Calu3 (cell line): ENCODE measurements at regions of chr10 and their contacts with region 1.

Region 1: DNA sequence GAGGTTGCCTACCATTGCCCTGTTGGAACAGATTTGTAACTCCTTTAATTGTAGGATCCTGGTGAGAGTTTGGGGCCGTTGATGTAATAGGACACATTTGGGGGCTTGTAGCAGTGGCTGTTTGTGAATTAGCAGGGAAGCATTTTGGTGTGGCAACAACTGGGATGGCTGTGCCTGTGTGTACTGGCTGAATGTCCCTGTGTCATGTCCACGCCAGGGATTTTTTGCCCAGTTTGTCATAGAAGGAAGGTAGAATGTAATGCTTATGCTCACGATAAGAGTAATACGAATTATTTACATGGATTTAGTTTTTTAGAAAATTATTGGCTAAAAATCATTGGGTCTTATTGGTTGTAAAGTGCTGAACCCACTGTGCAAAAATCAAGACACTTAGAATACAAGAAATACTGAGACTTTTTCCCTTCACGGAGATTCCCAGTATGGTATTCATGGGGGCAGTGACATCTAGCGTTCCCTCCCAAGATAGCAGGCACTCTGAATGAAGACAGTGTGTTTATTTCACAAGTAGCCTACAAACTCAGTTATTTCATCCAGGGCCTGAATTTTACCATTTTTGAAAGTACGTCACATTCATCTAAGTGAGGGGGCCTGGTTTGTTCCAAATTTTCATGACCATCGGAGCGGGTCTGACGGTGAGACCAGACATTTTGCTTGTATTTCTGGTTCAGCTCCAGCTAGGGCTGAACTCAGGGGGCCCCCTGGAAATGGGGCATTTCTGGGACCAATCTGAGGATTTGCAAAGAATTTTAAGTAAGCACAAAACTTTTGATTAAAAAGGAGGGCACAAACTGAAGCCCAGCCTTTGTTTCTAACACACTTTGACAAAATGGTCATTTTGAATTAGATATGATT is 74.7 kb downstream of the CACNB2 start:
- DNase-seq: peak; percentile 44
- H3K4me3 Mint-ChIP-seq: no peak overlapping the region
- H3K27ac Mint-ChIP-seq: no peak overlapping the region
- H3K4me1 Mint-ChIP-seq: no peaks in the 10 kb centered on the region
- H3K27me3 Mint-ChIP-seq: no peaks in the 10 kb centered on the region
- CTCF ChIP-seq: peak; percentile 57

Region 2: GRCh38 chr10:17847585-17848296 is 367.2 kb before region 1 on chr10:
- CTCF ChIA-PET with region 1: interaction called, 4 read pairs
- intact Hi-C with region 1: loop called (anchors 2 kb)
- DNase-seq: no peak
- H3K4me3 Mint-ChIP-seq: no peak overlapping the region
- H3K27ac Mint-ChIP-seq: no peak overlapping the region
- H3K4me1 Mint-ChIP-seq: no peaks in the 10 kb centered on the region
- H3K27me3 Mint-ChIP-seq: peaks cover 23% of the 10 kb centered on the region
- CTCF ChIP-seq: peak; percentile 24

Region 3: GRCh38 chr10:17910125-17910789 is 304.7 kb before region 1 on chr10:
- CTCF ChIA-PET with region 1: no interaction called
- intact Hi-C with region 1: loop called (anchors 2 kb)
- DNase-seq: peak; percentile 20
- H3K4me3 Mint-ChIP-seq: no peak overlapping the region
- H3K27ac Mint-ChIP-seq: no peak overlapping the region
- H3K4me1 Mint-ChIP-seq: no peaks in the 10 kb centered on the region
- H3K27me3 Mint-ChIP-seq: no peaks in the 10 kb centered on the region
- CTCF ChIP-seq: peak; percentile 24